ENCODE measurements at regions of chr12 and their contacts with region 1.

Region 1: DNA sequence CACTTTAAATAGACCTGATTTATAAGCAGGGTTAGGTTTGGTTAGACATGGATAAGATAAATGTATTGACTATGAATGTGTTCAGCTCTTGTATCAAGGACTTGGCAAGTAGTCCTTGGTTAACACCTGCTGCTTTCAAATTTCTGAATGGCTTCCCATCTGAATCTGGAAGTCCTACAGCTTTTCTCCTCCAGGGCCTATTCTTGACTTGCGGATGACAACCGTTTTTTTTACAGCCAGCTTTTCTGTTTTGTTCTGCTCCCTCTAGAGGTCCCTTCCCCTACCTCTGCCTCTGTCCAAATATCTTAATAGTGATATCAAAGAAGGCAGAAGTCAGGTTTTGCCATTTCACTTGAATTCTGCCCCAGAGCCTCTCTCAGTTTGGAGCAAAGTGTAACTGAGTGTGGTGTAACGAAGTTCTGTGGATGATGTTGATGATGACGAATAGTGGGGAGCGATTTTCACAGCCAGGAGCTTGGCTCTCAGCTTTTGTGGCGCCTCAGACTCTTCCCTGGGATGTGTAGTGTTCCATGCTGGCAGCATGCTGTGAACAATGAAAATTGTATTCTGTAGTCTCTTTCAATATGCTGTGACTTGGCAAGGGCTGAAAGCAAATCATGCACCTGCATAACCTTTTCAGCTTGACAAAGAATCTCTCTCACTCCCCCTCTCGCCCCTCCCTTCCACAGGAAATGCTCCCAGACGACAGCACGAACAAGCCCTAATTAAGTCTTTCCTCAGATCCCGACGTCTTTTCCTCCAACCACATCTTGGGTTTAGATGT is 5.0 kb upstream of the SLC4A8 start:
- DNase-seq: no peak
- ATAC-seq: no peak
- H3K4me3 ChIP-seq: no peak overlapping the region
- H3K27ac ChIP-seq: no peak overlapping the region
- H3K4me1 ChIP-seq: no peaks in the 10 kb centered on the region
- H3K27me3 ChIP-seq: peaks cover 0 to 10% (median 4%) of the 10 kb centered on the region in 3 donors
- CTCF ChIP-seq: no peak
- POLR2A ChIP-seq: no peak

Region 2: DNA sequence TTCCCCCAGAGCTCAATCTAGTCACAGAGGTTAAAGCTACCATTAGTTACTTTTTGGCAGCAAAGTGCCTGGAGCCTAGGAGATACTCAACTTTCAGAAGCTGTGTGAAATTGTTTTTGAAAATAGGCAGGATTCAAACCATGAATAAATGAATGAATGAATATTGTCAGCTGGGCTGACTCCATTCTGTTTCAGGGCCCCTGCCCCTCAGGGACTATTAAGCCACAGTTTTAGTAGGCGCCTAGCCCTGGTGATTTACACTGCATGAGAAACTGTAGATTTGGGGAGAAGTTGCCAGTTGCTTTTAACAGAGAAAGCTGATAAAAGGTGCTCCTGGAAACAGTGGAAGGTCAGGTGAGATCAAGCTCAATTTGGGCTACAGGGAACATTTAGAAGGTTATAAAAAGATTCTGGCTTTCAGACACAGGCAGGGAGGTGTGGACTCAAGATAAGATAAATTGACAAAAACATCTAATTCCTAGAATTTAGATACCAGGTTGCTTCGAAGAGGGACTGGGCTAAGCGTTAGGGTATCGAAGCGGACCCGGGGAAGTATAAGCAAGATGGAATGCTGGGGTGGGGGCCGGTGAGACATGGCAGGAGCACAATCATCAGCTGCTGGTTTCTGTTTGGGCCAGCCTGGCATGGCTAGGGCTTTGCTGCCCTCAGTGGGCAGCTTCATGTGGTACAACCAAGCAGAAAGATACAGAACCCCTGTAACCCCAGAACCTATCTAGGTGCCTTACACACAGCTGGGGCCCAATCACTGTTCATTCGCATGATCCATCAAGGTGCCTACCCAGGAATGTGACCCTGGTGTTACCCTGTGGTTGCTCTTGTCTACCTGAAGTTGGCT is 58.2 kb before region 1 on chr12:
- in situ Hi-C with region 1: no loop called
- intact Hi-C with region 1: no loop called
- DNase-seq: no peak
- ATAC-seq: no peak
- H3K4me3 ChIP-seq: no peak overlapping the region
- H3K27ac ChIP-seq: no peak overlapping the region
- H3K4me1 ChIP-seq: no peaks in the 10 kb centered on the region
- H3K27me3 ChIP-seq: no peaks in the 10 kb centered on the region
- CTCF ChIP-seq: no peak
- POLR2A ChIP-seq: no peak

Region 3: GRCh38 chr12:51441583-51441982 is 22.0 kb after region 1 on chr12:
- in situ Hi-C with region 1: no loop called
- intact Hi-C with region 1: no loop called
- DNase-seq: no peak
- ATAC-seq: no peak
- H3K4me3 ChIP-seq: no peak overlapping the region
- H3K27ac ChIP-seq: no peak overlapping the region
- H3K4me1 ChIP-seq: no peaks in the 10 kb centered on the region
- H3K27me3 ChIP-seq: peaks cover 0 to 5% (median 3%) of the 10 kb centered on the region in 3 donors
- CTCF ChIP-seq: no peak
- POLR2A ChIP-seq: no peak

Region 4: GRCh38 chr12:51980051-51980808 is 560.6 kb after region 1 on chr12:
- in situ Hi-C with region 1: no loop called
- intact Hi-C with region 1: loop called (anchors 10 kb)
- DNase-seq: peak; percentile 49 to 52
- ATAC-seq: peak; percentile 89 to 93
- H3K4me3 ChIP-seq: no peak overlapping the region
- H3K27ac ChIP-seq: no peak overlapping the region
- H3K4me1 ChIP-seq: no peaks in the 10 kb centered on the region
- H3K27me3 ChIP-seq: no peaks in the 10 kb centered on the region
- CTCF ChIP-seq: peak; percentile 90 to 99 (median 92)
- POLR2A ChIP-seq: no peak

Measured in gastrocnemius medialis (tissue), 4 donors.